Psoas muscle (tissue), 8 donors: ENCODE measurements at regions of chr1 and their contacts with region 1.

Region 1: GRCh38 chr1:154198756-154199562 is 7.1 kb upstream of the TPM3 start:
- DNase-seq: no peak
- ATAC-seq: peak in 2 of 4 donors; percentile 43 to 56
- H3K4me3 ChIP-seq: peak overlapping the region; percentile 5
- H3K27ac ChIP-seq: peak overlapping the region; percentile 89
- H3K4me1 ChIP-seq: peaks cover 6% of the 10 kb centered on the region
- H3K27me3 ChIP-seq: no peaks in the 10 kb centered on the region
- CTCF ChIP-seq: peak; percentile 38

Region 2: GRCh38 chr1:154157520-154158306 is 41.2 kb before region 1 on chr1:
- intact Hi-C with region 1: no loop called
- DNase-seq: no peak
- ATAC-seq: no peak
- H3K4me3 ChIP-seq: no peak overlapping the region
- H3K27ac ChIP-seq: peak overlapping the region; percentile 44
- H3K4me1 ChIP-seq: peaks cover 8% of the 10 kb centered on the region
- H3K27me3 ChIP-seq: no peaks in the 10 kb centered on the region
- CTCF ChIP-seq: no peak

Region 3: DNA sequence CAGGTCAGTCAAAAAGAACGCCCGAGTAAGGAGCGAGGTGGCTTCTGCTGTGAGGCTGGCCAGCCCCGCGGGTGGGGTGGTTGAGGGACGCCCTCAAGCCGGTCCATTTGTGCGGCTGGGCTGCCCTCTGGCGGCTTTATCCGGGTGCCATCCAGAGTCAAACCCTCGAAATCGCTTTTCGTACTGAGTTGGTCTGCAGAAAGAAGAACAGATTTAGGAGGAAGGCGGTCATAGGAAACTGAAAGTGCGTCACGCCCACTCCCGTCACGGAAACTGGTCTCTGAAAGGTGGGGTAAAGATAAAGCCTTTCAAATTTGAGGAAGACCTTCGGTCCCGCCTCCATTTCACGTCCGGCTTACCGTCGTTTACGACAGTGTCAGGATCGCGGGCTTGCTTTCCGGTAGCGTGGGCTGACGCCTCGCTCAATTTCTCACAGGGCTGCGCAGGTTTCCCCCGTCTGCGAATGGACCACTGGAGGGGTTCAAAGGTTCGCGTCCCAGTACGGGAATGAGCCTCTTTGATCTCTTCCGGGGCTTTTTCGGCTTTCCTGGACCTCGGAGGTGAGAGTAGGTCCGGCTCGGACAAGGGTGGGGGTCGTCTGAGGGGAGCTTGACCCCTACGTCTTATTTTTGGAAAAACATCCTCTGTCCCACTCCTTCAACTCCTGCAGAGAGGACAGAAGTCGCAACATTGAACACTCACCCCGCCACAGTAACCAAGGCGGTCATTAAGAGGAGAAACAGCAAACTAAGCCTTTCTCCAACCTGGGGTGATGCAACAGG is 73.4 kb after region 1 on chr1 and contains the start of gene HAX1:
- intact Hi-C with region 1: loop called (anchors 5 to 10 kb)
- DNase-seq: peak; percentile 92 to 95
- ATAC-seq: peak; percentile 91 to 94 (median 92)
- H3K4me3 ChIP-seq: peak within 1 kb of the TSS; percentile 80
- H3K27ac ChIP-seq: peak within 1 kb of the TSS; percentile 86
- H3K4me1 ChIP-seq: peaks cover 13% of the 10 kb centered on the region
- H3K27me3 ChIP-seq: no peaks in the 10 kb centered on the region
- CTCF ChIP-seq: peak; percentile 83
- total RNA-seq, gene HAX1: 122 to 148 (median 136) TPM